Right ventricle myocardium superior (tissue), 1 donor: ENCODE measurements at regions of chr19 and their contacts with region 1.

Region 1: DNA sequence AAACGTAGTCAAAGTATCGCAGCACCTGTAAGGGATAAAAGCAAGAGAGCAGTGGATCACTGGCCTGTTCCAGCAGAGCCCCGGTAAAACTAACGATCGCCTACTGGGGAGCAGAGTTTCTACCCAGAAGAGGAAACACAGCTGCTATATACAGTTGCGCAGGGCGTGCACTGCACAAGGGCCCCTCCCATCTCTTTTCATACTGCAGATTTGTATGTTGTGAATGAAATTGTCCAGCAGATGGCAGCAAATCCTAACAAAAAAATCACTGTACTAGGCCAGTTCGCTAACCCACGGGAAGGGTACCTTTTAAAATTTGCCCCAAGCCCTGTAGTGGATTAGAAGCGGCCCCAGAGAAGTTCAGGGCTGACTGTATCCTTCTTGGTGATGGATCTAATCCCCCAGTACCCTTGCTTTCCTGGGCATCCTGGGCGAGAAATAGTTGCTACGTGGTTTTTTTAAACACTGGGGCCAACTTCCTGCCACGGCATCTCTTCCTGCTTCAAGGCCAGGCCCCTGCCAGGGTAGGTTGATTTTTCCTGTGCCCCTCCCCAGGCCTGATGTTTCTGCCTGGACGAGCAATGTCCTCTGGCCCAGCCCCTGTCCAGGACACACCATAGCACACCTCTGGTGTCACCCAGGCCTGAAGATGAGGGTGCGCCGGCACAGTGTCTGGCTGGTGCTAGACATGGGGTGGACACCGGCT is 127.0 kb downstream of the IER2 start:
- DNase-seq: peak; percentile 57
- ATAC-seq: peak; percentile 97

Region 2: GRCh38 chr19:13428336-13428735 is 151.1 kb after region 1 on chr19:
- intact Hi-C with region 1: loop called (anchors 10 kb)
- DNase-seq: no peak
- ATAC-seq: no peak

Region 3: GRCh38 chr19:13441810-13442512 is 164.7 kb after region 1 on chr19:
- intact Hi-C with region 1: no loop called
- DNase-seq: no peak
- ATAC-seq: no peak

Region 4: GRCh38 chr19:13588957-13589833 is 311.9 kb after region 1 on chr19:
- intact Hi-C with region 1: loop called (anchors 2 kb)
- DNase-seq: peak; percentile 85
- ATAC-seq: peak; percentile 80

Region 5: GRCh38 chr19:13727798-13728197 is 450.5 kb after region 1 on chr19:
- intact Hi-C with region 1: loop called (anchors 10 kb)
- DNase-seq: no peak
- ATAC-seq: no peak